Activated T-helper 1 cell treated with anti-CD3 and anti-CD28 coated beads, Interleukin-12 subunit alpha, Interleukin-12 subunit beta, Interleukin-2, Interleukin-4 antibody, amounts not matched to agents 30 ng/mL and 10 ng/mL and 1 ng/mL, durations not matched to agents 14 hours and 24 hours and 36 hours (primary cell): ENCODE measurements at regions of chr1 and their contacts with region 1.

Region 1: GRCh38 chr1:14961661-14962267 is 191.8 kb upstream of the TMEM51 start:
- DNase-seq: no peak
- H3K4me3 Mint-ChIP-seq: no peak overlapping the region
- H3K27ac Mint-ChIP-seq: no peak overlapping the region
- H3K4me1 Mint-ChIP-seq: no peaks in the 10 kb centered on the region
- H3K27me3 Mint-ChIP-seq: no peaks in the 10 kb centered on the region

Region 2: DNA sequence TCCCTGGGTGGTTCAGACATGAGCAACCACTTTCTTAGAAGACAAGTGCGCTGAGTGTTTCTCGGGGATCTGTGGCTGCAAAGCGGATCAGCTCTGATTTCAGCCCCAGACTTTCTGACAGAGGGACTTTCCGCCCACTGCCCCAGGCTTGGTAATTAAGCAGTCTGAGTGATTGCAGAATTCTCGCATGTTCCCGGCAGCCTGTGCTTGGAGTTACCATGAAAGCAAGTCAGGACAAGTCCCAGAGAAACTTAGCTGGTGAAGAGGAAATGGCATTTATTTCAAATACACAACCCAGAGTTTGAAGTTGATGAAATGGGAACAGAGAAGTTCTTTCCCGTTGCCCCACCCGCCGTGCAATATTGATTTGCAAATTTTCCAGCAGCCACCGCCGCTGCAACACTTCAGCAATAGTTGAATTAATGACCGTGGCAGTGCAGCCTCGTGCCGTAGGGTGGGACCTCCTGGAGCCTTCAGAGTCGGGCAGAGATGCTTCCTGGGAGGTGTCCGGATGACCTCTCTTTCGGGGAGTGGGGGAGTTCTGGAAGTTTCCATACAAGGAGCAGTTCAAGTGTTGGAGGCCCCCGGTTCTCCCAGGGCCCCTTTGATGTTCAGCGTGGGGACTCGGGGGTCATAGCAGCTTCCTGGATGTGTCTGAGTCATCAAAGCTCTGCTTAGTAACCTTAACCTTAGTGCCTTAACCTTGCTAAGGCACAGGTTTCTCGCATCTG is 228.6 kb before region 1 on chr1:
- intact Hi-C with region 1: no loop called
- DNase-seq: no peak
- H3K4me3 Mint-ChIP-seq: no peak overlapping the region
- H3K27ac Mint-ChIP-seq: no peak overlapping the region
- H3K4me1 Mint-ChIP-seq: no peaks in the 10 kb centered on the region
- H3K27me3 Mint-ChIP-seq: peaks cover 4% of the 10 kb centered on the region

Region 3: DNA sequence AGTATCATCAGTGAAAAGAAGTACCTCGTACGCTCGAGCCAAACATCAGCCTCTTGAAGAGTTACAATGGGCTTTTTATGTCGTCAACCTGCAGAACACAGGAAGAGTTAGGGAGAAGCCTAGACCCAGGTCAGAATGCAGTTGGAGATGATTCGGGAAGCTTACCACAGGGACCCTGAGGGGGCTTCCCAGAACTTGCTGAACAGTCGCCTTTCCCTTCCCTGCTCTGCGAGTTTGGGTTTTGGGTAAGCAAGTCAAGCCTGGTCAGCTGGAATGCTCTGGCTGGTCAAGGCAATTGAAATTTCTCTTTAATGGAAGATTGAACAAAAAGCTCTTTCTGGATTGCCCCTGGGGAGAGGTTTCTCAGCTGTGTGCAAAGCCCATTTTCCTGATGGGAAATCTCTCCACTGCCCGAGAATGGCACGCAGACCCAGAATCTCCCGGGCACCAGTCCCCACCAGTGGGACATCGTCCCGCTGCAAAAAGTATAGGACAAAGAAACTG is 71.8 kb before region 1 on chr1:
- intact Hi-C with region 1: loop called (anchors 2 kb)
- DNase-seq: no peak
- H3K4me3 Mint-ChIP-seq: no peak overlapping the region
- H3K27ac Mint-ChIP-seq: no peak overlapping the region
- H3K4me1 Mint-ChIP-seq: no peaks in the 10 kb centered on the region
- H3K27me3 Mint-ChIP-seq: peaks cover 2% of the 10 kb centered on the region